ENCODE measurements at regions of chr1 and their contacts with region 1.

Region 1: DNA sequence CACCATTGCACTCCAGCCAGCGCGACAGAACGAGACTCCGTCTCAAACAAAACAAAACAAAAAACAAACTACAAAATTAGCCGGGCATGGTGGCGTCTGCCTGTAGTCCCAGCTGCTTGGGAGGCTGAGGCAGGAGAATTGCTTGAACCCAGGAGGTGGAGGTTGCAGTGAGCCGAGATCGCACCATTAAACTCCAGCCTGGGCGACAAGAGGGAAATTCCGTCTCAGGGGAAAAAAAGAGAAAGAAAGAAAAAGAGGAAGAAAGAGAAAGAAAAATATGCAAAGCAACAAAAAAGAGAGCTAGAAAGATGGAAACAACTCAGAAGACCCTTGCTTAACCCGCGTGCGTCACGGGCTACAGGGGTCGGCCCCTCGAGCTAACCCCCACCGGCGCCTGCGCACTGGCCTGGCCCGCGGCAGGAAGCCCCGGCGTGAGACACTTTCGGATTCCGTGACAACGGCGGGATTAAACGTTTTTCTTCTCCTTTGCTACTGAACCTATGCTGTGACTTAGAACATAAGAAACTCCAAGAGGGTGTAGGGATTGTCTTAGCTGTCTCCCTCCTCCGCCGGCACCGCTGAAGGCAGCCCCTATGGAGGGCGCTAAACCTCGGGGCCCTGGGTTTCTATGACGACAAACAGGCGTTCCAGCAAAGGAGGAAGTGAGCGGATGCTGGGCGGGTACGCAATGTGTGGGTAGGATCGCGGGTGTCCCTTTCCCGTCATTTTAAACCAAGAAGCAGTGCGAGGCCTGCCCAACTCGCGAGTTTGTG is at the start of gene AXDND1:
- DNase-seq: peak; percentile 93
- ATAC-seq: peak; percentile 95
- H3K4me3 Mint-ChIP-seq: peak within 1 kb of the TSS; percentile 94
- H3K27ac Mint-ChIP-seq: peak within 1 kb of the TSS; percentile 100
- H3K4me1 Mint-ChIP-seq: peaks cover 19% of the 10 kb centered on the region
- H3K27me3 Mint-ChIP-seq: no peaks in the 10 kb centered on the region
- total RNA-seq, gene AXDND1: 0.37 to 0.47 TPM

Region 2: GRCh38 chr1:178532392-178532791 is 833.1 kb before region 1 on chr1:
- CTCF ChIA-PET with region 1: interaction called, 3 read pairs
- POLR2A ChIA-PET with region 1: no interaction called
- intact Hi-C with region 1: loop called in 1 of 2 experiments (anchors 2 kb)
- DNase-seq: peak; percentile 86
- ATAC-seq: peak; percentile 84
- H3K4me3 Mint-ChIP-seq: no peak overlapping the region
- H3K27ac Mint-ChIP-seq: no peak overlapping the region
- H3K4me1 Mint-ChIP-seq: no peaks in the 10 kb centered on the region
- H3K27me3 Mint-ChIP-seq: no peaks in the 10 kb centered on the region

Region 3: DNA sequence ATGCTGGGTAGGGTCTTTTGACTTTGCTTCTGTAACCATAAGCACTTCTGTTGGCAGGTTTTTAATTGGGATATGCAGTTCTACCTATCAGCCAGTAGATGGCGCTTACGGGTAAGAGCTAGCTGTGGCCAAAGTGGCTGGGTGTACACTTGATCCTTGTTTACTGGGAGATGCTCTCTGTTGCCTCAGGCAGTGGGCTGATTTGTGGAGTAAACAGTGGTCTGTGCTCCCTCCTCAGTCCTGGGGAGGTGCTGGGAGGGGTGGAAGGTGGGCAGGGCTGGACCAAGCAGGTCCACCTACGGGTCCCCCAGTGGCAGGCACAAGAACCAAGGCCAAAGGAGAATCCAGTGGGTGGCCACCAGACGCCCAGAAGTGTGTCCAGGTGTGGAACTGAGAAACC is 597.1 kb before region 1 on chr1:
- CTCF ChIA-PET with region 1: no interaction called
- POLR2A ChIA-PET with region 1: no interaction called
- intact Hi-C with region 1: loop called in 1 of 2 experiments (anchors 2 kb)
- DNase-seq: peak; percentile 28
- ATAC-seq: peak; percentile 53
- H3K4me3 Mint-ChIP-seq: no peak overlapping the region
- H3K27ac Mint-ChIP-seq: no peak overlapping the region
- H3K4me1 Mint-ChIP-seq: no peaks in the 10 kb centered on the region
- H3K27me3 Mint-ChIP-seq: no peaks in the 10 kb centered on the region

Region 4: DNA sequence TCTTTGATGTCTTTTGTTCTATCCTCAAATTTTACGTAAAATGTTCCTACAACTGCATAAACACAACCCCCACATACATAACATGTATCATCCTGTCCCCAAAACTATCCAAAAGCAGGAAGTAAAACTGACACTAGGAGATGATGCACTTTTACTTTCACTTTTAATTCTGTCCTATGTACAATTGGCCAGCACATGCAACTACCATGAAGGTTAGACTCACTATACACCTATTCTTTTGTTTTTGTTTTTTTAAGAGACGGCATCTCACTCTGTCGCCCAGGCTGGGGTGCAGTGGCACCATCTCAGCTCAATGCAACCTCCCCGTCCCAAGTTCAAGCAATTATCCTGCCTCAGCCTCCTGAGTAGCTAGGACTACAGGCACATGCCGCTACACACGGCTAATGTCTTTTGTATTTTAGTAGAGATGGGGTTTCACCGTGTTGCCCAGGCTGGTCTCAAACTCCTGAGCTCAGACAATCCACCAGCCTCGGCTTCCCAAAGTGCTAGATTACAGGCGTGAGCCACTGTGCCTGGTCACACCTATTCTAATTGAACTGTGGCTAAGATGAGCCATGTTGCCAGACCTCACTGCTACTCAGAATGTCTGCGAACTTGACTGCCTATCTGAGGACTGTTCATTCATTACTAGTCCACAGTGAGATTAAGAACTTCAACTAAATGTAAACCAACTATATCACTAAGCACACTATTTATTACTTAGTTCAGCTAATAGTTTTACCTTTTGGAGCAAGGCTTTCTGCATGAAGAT is 235.6 kb before region 1 on chr1:
- CTCF ChIA-PET with region 1: interaction called, 6 read pairs
- POLR2A ChIA-PET with region 1: no interaction called
- intact Hi-C with region 1: loop called (anchors 1 kb)
- DNase-seq: peak; percentile 31
- ATAC-seq: peak; percentile 97
- H3K4me3 Mint-ChIP-seq: peak overlapping the region; percentile 61
- H3K27ac Mint-ChIP-seq: peak overlapping the region; percentile 92
- H3K4me1 Mint-ChIP-seq: peaks cover 39% of the 10 kb centered on the region
- H3K27me3 Mint-ChIP-seq: no peaks in the 10 kb centered on the region

Region 5: DNA sequence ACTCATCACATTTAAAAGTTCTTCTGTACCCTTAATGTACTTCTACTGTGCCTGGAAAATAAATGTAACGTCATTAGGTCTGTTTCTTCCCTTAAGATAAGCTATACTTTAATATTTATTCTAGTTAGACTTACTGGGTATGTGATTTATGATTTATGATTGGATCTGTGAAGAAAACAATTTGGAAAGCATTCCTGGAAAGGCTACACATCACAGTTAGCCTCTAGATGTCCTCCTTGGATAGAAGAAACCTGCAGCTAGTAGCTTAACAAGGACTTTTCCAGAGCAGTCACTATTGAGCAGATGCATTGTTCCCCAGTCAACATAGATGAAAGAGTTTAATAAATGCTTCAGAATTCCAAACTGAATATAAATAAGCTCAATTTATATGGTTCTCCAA is 113.8 kb before region 1 on chr1:
- CTCF ChIA-PET with region 1: interaction called, 14 read pairs
- POLR2A ChIA-PET with region 1: no interaction called
- intact Hi-C with region 1: loop called (anchors 1 kb)
- DNase-seq: no peak
- ATAC-seq: no peak
- H3K4me3 Mint-ChIP-seq: no peak overlapping the region
- H3K27ac Mint-ChIP-seq: no peak overlapping the region
- H3K4me1 Mint-ChIP-seq: no peaks in the 10 kb centered on the region
- H3K27me3 Mint-ChIP-seq: no peaks in the 10 kb centered on the region

Region 6: DNA sequence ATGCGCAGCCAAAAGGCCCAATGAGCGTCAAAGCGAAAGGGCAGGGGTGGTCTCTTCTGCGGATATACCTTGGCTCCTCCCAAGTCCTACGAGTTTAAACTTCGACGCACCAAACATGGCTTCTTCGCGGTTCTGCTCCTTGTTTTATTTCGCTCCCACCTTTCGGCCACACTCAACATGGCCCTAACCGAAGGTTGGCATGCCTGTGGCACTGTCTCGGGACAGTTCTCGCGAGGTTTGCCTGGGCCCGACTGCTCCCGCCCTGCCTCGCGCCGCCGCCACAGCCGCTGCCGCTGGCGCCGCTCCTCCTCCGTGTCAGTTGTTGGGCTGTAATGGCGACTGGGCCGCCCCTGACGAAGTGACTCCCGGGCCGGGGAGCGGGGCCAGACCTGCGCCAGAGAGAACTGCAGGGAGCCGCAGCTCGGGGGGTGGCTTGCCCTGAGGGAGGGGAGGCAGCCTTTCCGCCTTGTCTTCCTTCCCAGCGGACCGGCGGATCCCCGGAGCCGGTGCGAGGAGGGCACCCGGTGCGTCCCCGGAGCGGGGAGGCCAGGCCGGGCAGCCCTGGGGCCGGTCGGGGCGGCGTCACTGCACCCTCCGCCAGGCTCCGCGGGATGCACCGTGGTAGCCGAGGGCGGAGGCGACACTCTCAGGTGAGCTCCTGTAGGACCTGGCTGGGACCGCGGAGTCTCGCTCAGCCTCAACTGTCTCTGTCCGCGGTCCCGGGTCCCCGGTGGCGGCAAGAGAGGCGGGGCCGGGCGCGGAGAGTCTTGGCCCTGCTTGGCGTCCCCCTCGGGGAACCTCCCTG is 589.2 kb after region 1 on chr1 and contains the start of gene CEP350:
- CTCF ChIA-PET with region 1: no interaction called
- POLR2A ChIA-PET with region 1: no interaction called
- intact Hi-C with region 1: loop called in 1 of 2 experiments (anchors 5 kb)
- DNase-seq: peak; percentile 99
- ATAC-seq: peak; percentile 94
- H3K4me3 Mint-ChIP-seq: peak within 1 kb of the TSS; percentile 82
- H3K27ac Mint-ChIP-seq: peak within 1 kb of the TSS; percentile 98
- H3K4me1 Mint-ChIP-seq: peaks cover 47% of the 10 kb centered on the region
- H3K27me3 Mint-ChIP-seq: no peaks in the 10 kb centered on the region
- total RNA-seq, gene CEP350: 38.2 to 42.1 TPM

Measured in activated CD4-positive, alpha-beta T cell treated with anti-CD3 and anti-CD28 coated beads for 36 hours (primary cell).